HepG2 (cell line): ENCODE measurements at regions of chrX and their contacts with region 1.

Region 1: DNA sequence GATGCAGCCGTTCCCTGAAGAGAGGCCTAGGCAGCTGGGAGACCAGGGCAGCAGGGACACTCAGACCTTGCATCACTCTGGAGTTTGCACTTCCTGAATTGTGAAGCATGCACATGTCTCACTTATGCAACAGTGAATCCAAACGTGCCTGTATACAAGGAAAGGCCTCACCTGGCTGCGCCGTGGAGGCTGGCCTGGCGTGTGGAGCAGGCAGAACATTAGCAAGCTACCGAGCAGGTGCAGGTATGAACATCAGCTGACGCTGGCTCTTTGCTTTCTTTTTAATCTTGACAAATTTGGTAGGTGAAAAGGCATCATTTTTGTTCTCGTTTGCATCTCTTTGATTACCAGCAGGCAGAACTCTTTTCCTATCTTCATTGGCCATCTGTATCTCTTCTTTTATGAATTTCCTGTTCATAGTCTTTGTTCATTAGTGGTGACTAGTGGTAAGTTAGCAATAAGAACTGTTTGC is 37.1 kb upstream of the IRAK1 start:
- DNase-seq: peak; percentile 86
- ATAC-seq: peak; percentile 96
- H3K4me3 ChIP-seq: no peak overlapping the region
- H3K27ac ChIP-seq: peak overlapping the region; percentile 71
- H3K4me1 ChIP-seq: peaks cover 37% of the 10 kb centered on the region
- H3K27me3 ChIP-seq: no peaks in the 10 kb centered on the region
- CTCF ChIP-seq: 0 out of 2 replicates have a peak, but pooled peaks have one; percentile 7
- EP300 ChIP-seq: peak in 1 of 2 experiments; percentile 76; a peak in 2 of 4 replicates
- POLR2A ChIP-seq: no peak
- RAD21 ChIP-seq: no peak

Region 2: DNA sequence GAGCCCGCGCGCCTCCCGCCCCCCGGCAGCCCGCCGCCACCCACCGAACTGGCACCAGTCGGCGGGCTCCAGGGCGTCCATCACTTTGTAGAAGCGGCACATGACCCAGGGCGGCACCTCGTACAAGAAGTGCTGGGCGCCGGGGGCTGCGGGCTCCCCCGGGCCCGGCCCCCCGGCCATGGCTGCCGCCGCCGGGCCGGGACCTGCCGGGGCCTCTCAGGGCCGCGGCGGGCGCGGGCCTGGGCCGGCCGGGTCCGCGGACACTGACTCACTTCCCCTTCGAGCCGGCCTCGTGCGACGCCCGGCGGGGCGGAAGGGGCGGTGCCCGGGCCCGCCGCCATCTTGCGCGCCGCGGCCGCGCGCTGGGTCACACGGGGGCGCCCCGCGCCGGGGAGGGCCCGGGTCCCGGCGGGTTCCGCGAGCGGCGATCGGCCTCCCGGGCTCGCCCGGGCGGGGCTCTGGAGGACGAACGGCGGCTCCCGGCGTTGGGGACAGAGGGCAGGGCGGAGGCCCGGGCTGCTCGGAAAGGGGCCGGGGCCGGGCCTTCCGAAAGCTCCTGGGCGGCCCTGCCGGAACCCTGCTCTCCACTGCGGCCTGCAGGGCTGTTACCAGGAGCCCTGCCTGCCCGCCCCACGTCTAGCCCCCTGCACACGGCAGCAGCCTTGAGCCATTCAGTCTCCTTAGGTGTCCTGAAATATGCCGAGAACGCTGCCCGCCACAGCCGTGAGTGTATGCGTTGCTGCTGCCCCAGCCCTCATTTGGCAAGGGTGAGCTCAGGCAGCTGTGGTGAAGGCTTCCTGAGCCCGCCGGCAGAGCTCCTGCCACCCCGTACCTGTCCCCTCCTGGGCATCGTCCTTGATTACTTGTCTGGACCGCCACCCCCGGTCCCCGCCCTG is 36.9 kb before region 1 on chrX and contains the start of gene IRAK1:
- CTCF ChIA-PET with region 1: no interaction called
- POLR2A ChIA-PET with region 1: no interaction called
- in situ Hi-C with region 1: no loop called
- intact Hi-C with region 1: loop called (anchors 2 kb)
- DNase-seq: no peak
- ATAC-seq: peak; percentile 58
- H3K4me3 ChIP-seq: peak within 1 kb of the TSS; percentile 59 to 78 (median 77)
- H3K27ac ChIP-seq: peak within 1 kb of the TSS; percentile 69
- H3K4me1 ChIP-seq: peaks cover 44% of the 10 kb centered on the region
- H3K27me3 ChIP-seq: no peaks in the 10 kb centered on the region
- CTCF ChIP-seq: no peak
- EP300 ChIP-seq: no peak
- POLR2A ChIP-seq: no peak
- RAD21 ChIP-seq: peak; percentile 25
- total RNA-seq, gene IRAK1: 69.8 and 77.3 TPM in 2 replicates